Mammary epithelial cell (primary cell): ENCODE measurements at regions of chr17 and their contacts with region 1.

Region 1: GRCh38 chr17:69501591-69502468 is 87.3 kb downstream of the MAP2K6 start:
- DNase-seq: peak; percentile 20
- H3K4me3 ChIP-seq: peak overlapping the region in 1 of 3 experiments; percentile 30
- H3K27ac ChIP-seq: no peak overlapping the region
- H3K4me1 ChIP-seq: peaks cover 11% of the 10 kb centered on the region
- H3K27me3 ChIP-seq: no peaks in the 10 kb centered on the region
- CTCF ChIP-seq: no peak

Region 2: GRCh38 chr17:69367298-69367697 is 134.5 kb before region 1 on chr17:
- CTCF ChIA-PET with region 1: no interaction called
- dilution Hi-C with region 1: no loop called
- in situ Hi-C with region 1: no loop called
- intact Hi-C with region 1: no loop called
- DNase-seq: no peak
- H3K4me3 ChIP-seq: no peak overlapping the region
- H3K27ac ChIP-seq: no peak overlapping the region
- H3K4me1 ChIP-seq: no peaks in the 10 kb centered on the region
- H3K27me3 ChIP-seq: no peaks in the 10 kb centered on the region
- CTCF ChIP-seq: no peak

Region 3: DNA sequence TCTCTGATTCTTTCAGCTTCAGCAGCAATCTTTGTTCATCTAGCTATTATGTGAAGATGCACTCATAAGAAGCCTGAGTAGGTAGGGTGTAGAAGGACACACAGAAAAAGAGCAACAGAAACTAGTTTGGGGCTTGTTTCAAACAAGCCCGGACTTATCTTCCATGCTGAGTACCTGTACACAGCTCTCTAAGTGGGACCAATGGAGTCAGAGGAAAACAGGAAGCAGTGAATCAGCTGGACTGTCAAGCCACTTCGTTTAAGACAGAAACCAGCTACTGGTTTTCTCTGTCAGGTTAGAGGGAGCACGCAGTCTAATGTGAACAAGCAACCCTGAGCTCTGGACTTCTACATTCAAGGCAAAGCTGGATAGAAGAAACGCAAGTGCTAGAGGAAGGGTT is 71.3 kb before region 1 on chr17:
- CTCF ChIA-PET with region 1: interaction called, 14 read pairs
- dilution Hi-C with region 1: no loop called
- in situ Hi-C with region 1: no loop called
- intact Hi-C with region 1: no loop called
- DNase-seq: peak; percentile 95
- H3K4me3 ChIP-seq: peak overlapping the region in 1 of 3 experiments; percentile 3
- H3K27ac ChIP-seq: peak overlapping the region; percentile 80
- H3K4me1 ChIP-seq: peaks cover 23% of the 10 kb centered on the region
- H3K27me3 ChIP-seq: no peaks in the 10 kb centered on the region
- CTCF ChIP-seq: no peak